ENCODE measurements at regions of chr9 and their contacts with region 1.

Region 1: GRCh38 chr9:32378993-32379729 is 5.3 kb upstream of the ACO1 start:
- DNase-seq: peak; percentile 56
- ATAC-seq: peak; percentile 85
- H3K4me3 Mint-ChIP-seq: no peak overlapping the region
- H3K27ac Mint-ChIP-seq: no peak overlapping the region
- H3K4me1 Mint-ChIP-seq: peaks cover 15% of the 10 kb centered on the region
- H3K27me3 Mint-ChIP-seq: peaks cover 17% of the 10 kb centered on the region

Region 2: GRCh38 chr9:31556667-31557463 is 822.3 kb before region 1 on chr9:
- CTCF ChIA-PET with region 1: no interaction called
- POLR2A ChIA-PET with region 1: no interaction called
- intact Hi-C with region 1: no loop called
- DNase-seq: no peak
- ATAC-seq: no peak
- H3K4me3 Mint-ChIP-seq: no peak overlapping the region
- H3K27ac Mint-ChIP-seq: no peak overlapping the region
- H3K4me1 Mint-ChIP-seq: no peaks in the 10 kb centered on the region
- H3K27me3 Mint-ChIP-seq: no peaks in the 10 kb centered on the region

Region 3: DNA sequence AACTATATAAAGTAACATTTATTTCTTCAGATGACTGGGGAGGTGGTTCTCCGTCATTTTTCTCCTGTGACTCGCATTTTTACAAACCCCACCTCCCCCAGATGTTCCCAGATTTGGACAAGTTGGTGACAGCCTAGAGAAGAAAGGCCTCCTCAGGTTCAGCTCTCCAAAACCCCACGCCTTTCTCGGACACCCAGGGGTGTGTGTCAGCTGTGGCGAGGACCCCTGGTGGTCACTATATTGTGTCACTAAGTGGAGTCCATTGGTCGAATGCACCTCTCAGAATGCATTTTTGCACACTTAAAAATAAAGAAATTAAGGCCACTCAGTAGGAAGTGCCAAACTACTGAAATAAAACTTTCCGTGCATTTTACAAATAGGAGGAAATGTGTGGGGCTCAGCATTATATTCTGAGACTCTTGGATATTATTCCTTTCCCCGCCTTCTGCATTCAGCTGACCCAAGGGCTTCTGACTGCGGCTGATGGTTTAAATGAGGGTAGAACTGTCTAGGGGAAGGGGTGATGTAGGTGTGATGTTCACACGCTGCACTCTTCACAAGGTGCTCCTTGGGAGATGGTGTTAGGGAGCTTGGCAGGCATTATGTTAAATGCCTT is 52.9 kb after region 1 on chr9:
- CTCF ChIA-PET with region 1: interaction called, 52 read pairs
- POLR2A ChIA-PET with region 1: no interaction called
- intact Hi-C with region 1: loop called (anchors 1 kb)
- DNase-seq: peak; percentile 54
- ATAC-seq: no peak
- H3K4me3 Mint-ChIP-seq: no peak overlapping the region
- H3K27ac Mint-ChIP-seq: no peak overlapping the region
- H3K4me1 Mint-ChIP-seq: no peaks in the 10 kb centered on the region
- H3K27me3 Mint-ChIP-seq: no peaks in the 10 kb centered on the region

Region 4: DNA sequence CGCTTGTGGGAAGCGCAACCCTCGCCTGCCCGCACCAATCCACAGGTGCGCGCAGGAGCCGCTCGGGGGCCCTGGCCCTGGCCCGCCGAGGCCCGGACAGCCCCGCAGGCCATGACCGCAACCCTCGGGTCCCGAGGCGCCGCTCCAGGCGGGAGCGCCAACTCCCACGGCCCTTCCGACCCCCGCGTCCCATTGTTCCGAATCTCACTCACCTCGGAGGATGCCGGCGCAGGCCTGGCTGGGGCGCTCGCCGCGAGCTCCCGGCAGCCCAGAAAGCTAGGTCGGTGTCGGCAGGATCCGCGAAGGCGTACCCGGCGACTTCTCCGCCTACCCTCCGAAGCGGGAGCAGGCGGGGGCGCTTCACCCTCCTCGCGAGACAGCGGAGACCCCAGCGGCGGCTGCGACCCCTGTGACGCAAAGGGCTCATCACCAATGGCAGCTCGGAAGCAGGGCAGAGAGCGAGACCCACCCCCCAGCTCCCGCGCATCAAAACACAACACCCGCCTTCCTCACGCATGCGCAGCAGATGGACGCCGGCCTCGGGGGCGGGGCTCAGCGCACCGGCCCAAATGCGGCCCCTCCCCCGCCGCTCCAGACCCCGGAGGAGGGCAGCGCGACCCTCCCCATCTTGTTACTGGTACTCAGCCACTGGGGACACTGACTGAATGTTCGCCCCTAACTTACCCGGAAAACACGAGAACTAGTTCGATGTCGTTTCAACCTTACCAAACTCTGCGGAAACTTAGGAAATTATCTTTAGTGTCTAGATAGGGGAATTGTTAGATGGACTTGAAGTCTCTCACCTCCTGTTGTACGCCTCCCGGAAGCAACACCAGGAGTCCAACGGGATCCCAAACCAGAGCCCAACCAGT is 171.6 kb after region 1 on chr9:
- CTCF ChIA-PET with region 1: interaction called, 8 read pairs
- POLR2A ChIA-PET with region 1: interaction called, 3 read pairs
- intact Hi-C with region 1: loop called in 1 of 2 experiments (anchors 1 kb)
- DNase-seq: peak; percentile 95
- ATAC-seq: peak; percentile 74
- H3K4me3 Mint-ChIP-seq: peak overlapping the region; percentile 96
- H3K27ac Mint-ChIP-seq: peak overlapping the region; percentile 99
- H3K4me1 Mint-ChIP-seq: peaks cover 47% of the 10 kb centered on the region
- H3K27me3 Mint-ChIP-seq: no peaks in the 10 kb centered on the region

Region 5: DNA sequence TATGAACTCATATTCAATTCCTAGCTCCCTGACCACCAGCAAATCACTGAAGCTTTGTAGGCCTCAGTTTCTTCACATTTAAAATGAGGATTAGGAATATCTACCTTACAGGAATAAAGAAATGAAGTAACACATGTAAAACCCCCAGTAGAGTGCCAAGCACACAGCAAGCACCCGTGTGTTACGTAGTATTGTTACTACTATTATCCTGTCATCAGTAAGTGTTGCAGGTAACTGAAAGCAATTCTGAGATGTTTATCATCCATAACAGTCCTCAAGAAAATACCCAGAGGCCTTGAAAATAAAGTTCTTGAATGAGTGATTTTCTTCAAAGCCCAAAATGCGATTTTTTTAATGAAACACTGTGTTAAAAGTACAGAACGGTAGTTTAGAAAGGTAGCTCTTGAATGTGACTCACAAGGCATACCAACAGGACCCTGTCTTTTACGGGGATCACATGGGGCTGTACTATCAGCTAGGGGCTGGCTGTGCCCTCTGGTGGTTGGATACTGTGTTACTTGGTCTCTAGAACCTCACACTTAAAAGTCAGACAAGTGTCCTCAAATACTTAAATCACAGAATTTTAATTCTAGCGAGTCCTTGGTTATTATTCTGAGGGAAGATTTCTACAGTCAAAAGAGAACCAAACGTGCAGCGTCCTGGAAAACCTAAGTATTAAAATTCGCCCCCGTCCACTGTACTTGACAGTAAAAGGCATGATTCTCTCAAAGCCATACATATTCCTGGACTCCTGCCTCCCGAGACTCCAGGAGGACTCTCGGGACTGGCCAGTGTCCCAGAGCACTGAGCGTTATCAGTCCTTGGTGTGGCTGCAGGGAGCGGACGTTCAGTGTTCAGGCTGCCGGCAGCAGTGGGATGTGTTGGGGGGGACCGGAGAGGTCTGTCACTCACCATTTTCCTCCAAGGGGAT is 193.1 kb after region 1 on chr9:
- CTCF ChIA-PET with region 1: interaction called, 530 read pairs
- POLR2A ChIA-PET with region 1: interaction called, 5 read pairs
- intact Hi-C with region 1: loop called (anchors 1 kb)
- DNase-seq: peak; percentile 85
- ATAC-seq: peak; percentile 92
- H3K4me3 Mint-ChIP-seq: peak overlapping the region; percentile 98
- H3K27ac Mint-ChIP-seq: peak overlapping the region; percentile 98
- H3K4me1 Mint-ChIP-seq: peaks cover 25% of the 10 kb centered on the region
- H3K27me3 Mint-ChIP-seq: no peaks in the 10 kb centered on the region

Region 6: GRCh38 chr9:32589083-32589723 is 210.0 kb after region 1 on chr9:
- CTCF ChIA-PET with region 1: interaction called, 530 read pairs
- POLR2A ChIA-PET with region 1: no interaction called
- intact Hi-C with region 1: no loop called
- DNase-seq: no peak
- ATAC-seq: peak; percentile 63
- H3K4me3 Mint-ChIP-seq: no peak overlapping the region
- H3K27ac Mint-ChIP-seq: no peak overlapping the region
- H3K4me1 Mint-ChIP-seq: no peaks in the 10 kb centered on the region
- H3K27me3 Mint-ChIP-seq: peaks cover 18% of the 10 kb centered on the region

Region 7: DNA sequence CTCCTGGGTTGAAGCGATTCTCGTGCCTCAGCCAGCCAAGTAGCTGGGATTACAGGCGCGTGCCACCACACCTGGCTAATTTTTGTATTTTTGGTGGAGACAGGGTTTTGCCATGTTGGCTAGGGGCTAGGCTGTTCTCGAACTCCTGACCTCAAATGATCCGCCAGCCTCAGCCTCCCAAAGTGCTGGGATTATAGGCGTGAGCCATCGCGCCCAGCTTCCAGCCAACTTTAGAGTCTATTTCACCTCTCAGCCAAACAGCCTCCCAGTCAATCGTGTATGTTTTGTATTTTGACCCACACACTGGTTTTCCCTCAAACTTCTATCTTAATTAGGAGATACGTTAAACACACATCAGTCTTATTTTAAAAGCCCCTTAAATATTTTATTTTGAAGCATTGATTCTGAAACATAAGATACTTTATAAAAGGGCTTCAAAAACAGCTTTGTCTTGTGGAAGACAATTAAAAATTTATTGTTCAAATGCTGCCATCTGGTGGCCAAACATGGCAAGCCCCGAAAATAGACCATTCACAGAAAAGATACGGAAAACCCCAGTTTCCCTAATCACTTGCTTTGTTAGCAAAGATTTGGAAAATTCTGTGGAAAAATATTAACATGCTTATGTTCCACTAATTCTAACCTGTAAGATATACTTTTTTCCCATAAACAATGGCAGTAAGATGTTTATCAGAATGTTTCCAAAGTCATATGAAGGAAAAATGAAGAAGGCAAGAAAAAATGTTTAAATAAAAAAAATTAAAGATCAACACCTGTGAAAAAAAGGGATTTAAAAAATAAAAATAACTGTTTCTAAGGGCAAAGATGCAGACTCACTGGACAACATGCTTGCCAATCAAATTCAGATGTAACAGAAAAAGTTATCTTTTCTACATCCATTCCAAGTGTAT is 589.2 kb after region 1 on chr9:
- CTCF ChIA-PET with region 1: interaction called, 62 read pairs
- POLR2A ChIA-PET with region 1: no interaction called
- intact Hi-C with region 1: loop called (anchors 1 kb)
- DNase-seq: peak; percentile 74
- ATAC-seq: no peak
- H3K4me3 Mint-ChIP-seq: no peak overlapping the region
- H3K27ac Mint-ChIP-seq: no peak overlapping the region
- H3K4me1 Mint-ChIP-seq: no peaks in the 10 kb centered on the region
- H3K27me3 Mint-ChIP-seq: no peaks in the 10 kb centered on the region

Measured in activated CD4-positive, alpha-beta T cell treated with anti-CD3 and anti-CD28 coated beads for 36 hours (primary cell).